ENCODE measurements at regions of chr16 and their contacts with region 1.

Region 1: DNA sequence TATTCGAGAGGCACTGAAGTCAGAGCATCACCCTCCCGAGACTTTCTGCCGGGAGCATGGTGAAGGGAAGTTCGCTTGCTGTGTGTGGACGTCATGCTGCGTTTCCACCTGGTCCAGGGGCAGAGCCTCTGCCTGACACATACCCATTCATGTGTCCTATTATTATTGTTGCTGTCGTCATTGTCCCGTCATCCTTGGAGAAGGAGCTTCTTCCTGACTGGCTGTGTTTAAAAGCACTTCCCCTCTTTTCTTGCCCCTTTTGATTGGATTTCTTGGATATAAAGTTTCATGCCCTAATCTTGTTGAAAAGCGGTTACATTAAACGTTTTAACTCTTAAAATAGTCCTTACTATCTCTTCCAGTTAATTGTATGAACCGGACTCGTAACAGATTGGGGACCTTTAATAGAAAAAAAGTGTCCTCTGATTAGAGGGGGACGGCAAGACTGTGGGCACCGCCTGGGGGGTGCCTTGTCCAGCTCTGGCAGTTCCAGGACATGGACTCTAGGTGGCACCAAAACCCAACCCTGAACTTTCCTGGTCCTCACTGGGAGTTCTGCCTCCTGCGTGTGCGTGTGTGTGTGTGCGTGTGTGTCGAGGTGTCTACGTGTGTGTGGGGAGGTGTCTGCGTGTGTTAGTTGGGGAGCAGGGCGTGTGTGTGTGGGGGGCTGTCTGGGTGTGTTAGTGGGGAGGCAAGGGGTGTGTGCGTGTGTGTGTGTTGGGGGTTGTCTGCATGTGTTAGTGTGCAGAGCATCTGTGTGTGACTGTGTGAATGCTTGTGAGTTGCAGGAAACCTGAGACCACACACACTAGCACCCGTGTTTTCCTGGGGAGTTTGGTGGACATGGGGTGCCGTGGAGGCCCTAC is 133.3 kb upstream of the CIBAR2 start:
- DNase-seq: peak; percentile 50
- H3K4me3 ChIP-seq: no peak overlapping the region
- H3K27ac ChIP-seq: no peak overlapping the region
- H3K27me3 ChIP-seq: no peaks in the 10 kb centered on the region
- CTCF ChIP-seq: peak; percentile 96

Region 2: DNA sequence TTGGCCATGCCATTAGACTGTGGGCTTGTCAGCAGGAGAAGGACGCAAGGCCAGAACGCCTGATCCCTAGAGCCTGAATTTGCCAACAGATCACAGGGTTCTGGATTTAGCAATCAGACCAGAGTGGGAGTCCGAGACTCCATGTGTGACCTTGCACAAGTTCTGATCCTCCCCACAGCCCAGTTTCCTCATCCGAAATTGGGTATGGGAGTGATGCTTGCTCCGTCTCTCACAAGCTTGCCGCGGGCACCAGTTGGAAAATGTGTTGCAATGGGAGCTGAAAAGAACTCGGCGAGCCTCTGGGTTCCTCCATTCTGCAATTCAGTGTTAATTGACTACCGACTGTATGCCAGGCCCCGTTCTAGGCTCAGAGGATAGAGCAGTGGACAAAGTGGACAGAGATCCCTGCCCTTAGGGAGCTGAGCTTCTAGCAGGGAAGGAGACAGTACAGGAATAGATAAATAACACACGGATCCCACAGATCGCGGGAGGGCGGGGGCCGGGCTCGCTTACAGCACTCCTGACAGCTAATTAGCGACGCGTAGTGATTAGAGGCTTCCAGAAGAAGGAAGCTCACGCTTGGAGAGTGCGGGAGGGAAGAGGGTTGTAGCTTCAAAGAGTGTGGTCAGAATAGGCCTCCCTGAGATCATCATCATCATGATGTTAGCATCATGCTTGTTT is 17.2 kb after region 1 on chr16:
- CTCF ChIA-PET with region 1: interaction called, 10 read pairs
- POLR2A ChIA-PET with region 1: no interaction called
- DNase-seq: no peak
- H3K4me3 ChIP-seq: no peak overlapping the region
- H3K27ac ChIP-seq: no peak overlapping the region
- H3K27me3 ChIP-seq: no peaks in the 10 kb centered on the region
- CTCF ChIP-seq: no peak

Region 3: DNA sequence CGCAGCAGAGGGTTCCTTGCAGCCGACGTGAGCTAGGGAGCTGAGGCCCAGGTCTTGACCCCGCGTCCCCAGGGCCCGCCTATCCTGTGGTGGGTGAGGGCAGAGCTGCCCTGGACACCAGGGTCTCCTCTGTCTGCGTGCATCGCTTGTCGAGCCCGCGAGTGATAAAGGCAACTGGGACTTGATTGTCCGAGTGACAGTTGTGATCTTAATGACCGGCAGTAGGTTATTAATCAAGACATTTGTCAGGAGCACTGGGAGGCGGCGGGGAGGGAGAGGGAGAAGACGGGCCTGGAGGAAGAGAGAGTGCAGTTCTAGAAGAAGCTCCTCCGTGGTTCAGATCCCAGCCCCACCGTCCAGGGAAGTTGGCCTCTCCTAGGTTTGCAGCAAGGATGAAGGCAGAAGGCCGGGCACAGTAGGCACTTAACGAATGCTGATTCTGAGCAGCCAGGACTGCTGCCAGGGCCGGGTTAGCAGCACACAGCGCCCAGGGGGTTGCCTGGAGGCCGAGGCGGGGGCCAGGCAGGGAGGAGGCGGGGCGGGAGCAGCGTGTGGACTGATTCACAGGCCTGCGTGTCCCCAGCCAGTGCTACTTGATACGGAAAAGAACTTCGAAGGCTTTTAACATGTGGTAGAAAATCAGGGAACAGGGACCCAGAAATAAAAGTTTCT is 356.3 kb after region 1 on chr16:
- CTCF ChIA-PET with region 1: no interaction called
- POLR2A ChIA-PET with region 1: no interaction called
- DNase-seq: no peak
- H3K4me3 ChIP-seq: no peak overlapping the region
- H3K27ac ChIP-seq: no peak overlapping the region
- H3K27me3 ChIP-seq: no peaks in the 10 kb centered on the region
- CTCF ChIP-seq: no peak

Measured in AG04450 (cell line).